Activated CD4-positive, alpha-beta T cell treated with anti-CD3 and anti-CD28 coated beads, Interleukin-2, amount 10 ng/mL, durations not matched to agents 24 days and 14 days (primary cell): ENCODE measurements at regions of chr15 and their contacts with region 1.

Region 1: GRCh38 chr15:81265944-81266775 is 57.8 kb downstream of the STARD5 start:
- DNase-seq: peak; percentile 95
- H3K4me3 Mint-ChIP-seq: peak overlapping the region; percentile 64
- H3K27ac Mint-ChIP-seq: peak overlapping the region; percentile 64
- H3K4me1 Mint-ChIP-seq: peaks cover 26% of the 10 kb centered on the region
- H3K27me3 Mint-ChIP-seq: peaks cover 5% of the 10 kb centered on the region

Region 2: DNA sequence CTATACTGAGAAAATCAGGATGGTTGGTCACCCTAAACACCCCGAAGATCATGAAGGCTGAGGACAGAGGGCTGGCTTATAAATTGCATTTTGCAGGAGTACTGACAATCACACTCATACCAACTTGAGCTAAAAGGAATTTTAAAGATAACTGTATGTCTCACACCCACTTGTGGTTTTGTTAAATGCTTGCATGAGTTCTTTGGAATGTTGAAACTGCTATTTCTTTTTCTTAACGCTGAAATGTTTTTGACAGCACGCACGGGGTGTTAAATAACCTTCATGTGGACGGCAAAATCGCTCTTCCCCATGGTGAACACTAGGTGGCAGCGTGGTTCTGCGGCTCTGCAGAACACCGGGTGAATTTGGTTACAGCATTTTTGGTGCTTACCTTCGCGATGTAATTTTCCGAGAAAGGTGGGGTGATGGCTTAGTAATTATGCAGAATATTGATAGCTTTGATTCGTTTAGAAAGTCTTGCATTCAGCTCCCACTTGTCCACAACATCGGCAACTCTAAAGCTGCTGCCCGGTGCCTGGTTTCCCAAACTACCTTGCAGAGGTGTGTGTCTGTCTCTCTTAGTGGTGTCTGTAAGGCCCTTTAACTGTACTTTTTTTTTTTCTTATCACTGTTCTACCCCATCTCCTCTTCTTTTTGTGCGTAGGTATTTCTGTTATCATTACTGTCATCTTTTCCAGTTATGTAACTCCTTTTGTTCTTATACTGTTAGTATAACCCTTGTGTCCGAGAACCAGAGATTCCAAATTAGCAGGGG is 810.3 kb before region 1 on chr15:
- intact Hi-C with region 1: loop called (anchors 5 kb)
- DNase-seq: peak; percentile 85
- H3K4me3 Mint-ChIP-seq: no peak overlapping the region
- H3K27ac Mint-ChIP-seq: no peak overlapping the region
- H3K4me1 Mint-ChIP-seq: peaks cover 4% of the 10 kb centered on the region
- H3K27me3 Mint-ChIP-seq: peaks cover 15% of the 10 kb centered on the region

Region 3: GRCh38 chr15:81000624-81001151 is 265.5 kb before region 1 on chr15 and contains the start of gene TLNRD1:
- intact Hi-C with region 1: loop called (anchors 1 kb)
- DNase-seq: peak; percentile 97
- H3K4me3 Mint-ChIP-seq: peak within 1 kb of the TSS; percentile 98
- H3K27ac Mint-ChIP-seq: peak within 1 kb of the TSS; percentile 98
- H3K4me1 Mint-ChIP-seq: peaks cover 49% of the 10 kb centered on the region
- H3K27me3 Mint-ChIP-seq: no peaks in the 10 kb centered on the region
- total RNA-seq, gene TLNRD1: 25.6 and 25.8 TPM in 2 replicates

Region 4: DNA sequence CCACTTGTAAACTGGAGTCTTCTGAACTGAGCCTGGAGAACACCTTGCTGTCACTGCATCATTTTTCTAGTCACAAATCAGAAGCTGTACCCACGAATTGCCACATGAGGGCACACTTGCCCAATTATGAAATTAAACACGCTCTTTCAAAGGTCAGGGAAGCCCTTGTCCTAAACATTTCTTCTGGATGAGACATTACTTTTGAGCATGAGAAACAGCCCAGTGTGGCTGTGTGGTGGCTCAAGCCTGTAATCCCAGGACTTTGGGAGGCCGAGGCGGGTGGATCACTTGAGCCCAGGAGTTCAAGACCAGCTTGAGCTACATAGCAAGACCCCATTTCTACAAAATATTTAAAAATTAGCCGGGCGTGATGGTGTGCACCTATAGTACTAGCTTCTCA is 159.6 kb before region 1 on chr15:
- intact Hi-C with region 1: loop called (anchors 1 kb)
- DNase-seq: peak; percentile 84
- H3K4me3 Mint-ChIP-seq: no peak overlapping the region
- H3K27ac Mint-ChIP-seq: no peak overlapping the region
- H3K4me1 Mint-ChIP-seq: peaks cover 12% of the 10 kb centered on the region
- H3K27me3 Mint-ChIP-seq: peaks cover 38% of the 10 kb centered on the region

Region 5: GRCh38 chr15:81155375-81156218 is 110.6 kb before region 1 on chr15:
- intact Hi-C with region 1: loop called (anchors 1 kb)
- DNase-seq: peak; percentile 77
- H3K4me3 Mint-ChIP-seq: no peak overlapping the region
- H3K27ac Mint-ChIP-seq: no peak overlapping the region
- H3K4me1 Mint-ChIP-seq: peaks cover 12% of the 10 kb centered on the region
- H3K27me3 Mint-ChIP-seq: peaks cover 9% of the 10 kb centered on the region

Region 6: GRCh38 chr15:82046666-82047452 is 780.7 kb after region 1 on chr15:
- intact Hi-C with region 1: loop called (anchors 10 kb)
- DNase-seq: peak; percentile 96
- H3K4me3 Mint-ChIP-seq: peak overlapping the region; percentile 91
- H3K27ac Mint-ChIP-seq: peak overlapping the region; percentile 89
- H3K4me1 Mint-ChIP-seq: peaks cover 17% of the 10 kb centered on the region
- H3K27me3 Mint-ChIP-seq: peaks cover 32% of the 10 kb centered on the region